ENCODE measurements at regions of chr10 and their contacts with region 1.

Region 1: DNA sequence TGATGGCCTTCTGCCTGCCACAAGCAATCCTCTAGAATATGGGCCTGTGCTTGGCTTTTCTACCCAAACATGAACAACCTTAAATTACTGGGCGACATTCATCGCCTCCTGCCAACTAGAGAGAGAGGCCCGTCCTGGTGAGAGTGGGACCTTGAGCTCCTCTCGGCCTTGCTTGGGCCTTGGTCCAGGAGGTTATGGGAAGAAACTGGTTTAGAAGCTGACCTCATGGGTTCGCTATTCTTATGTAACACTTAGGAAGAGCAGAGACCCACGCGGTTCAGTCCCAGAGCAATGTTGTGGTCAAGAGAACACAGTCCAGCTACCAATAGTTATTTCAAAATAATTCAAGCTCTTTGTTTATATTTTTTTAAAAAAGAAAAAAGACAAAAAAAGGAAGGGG is 176.3 kb upstream of the ZNF32 start:
- DNase-seq: no peak

Region 2: GRCh38 chr10:44060221-44060620 is 235.3 kb after region 1 on chr10:
- intact Hi-C with region 1: loop called in 1 of 2 experiments (anchors 2 kb)
- DNase-seq: no peak